ENCODE measurements at regions of chr7 and their contacts with region 1.

Region 1: GRCh38 chr7:115015619-115016018 is 93.7 kb downstream of the MDFIC start:
- DNase-seq: no peak
- ATAC-seq: no peak
- H3K4me3 ChIP-seq: no peak overlapping the region
- H3K4me3 Mint-ChIP-seq: no peak overlapping the region
- H3K27ac ChIP-seq: no peak overlapping the region
- H3K27ac Mint-ChIP-seq: no peak overlapping the region
- H3K4me1 ChIP-seq: peaks cover 9% of the 10 kb centered on the region
- H3K4me1 Mint-ChIP-seq: peaks cover 39% of the 10 kb centered on the region
- H3K27me3 ChIP-seq: no peaks in the 10 kb centered on the region
- H3K27me3 Mint-ChIP-seq: no peaks in the 10 kb centered on the region
- CTCF ChIP-seq: no peak

Region 2: DNA sequence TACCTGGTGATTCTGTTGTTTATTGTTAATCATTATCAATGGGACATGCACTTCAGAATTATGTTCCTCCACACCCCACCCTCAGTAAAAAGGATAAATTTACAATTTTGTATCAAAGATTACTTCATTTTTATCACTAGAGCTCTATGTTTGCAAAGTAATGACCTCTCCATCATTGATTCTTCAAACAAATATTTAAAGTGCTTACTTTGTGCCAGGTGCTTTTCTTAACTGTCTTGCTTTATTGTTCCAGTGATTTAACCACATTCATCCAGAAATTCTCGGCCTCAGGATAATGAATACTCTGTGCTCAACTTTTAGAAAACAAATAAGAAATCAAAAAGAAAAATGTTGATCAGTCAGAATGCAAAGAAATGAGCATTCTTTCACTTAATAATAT is 745.9 kb before region 1 on chr7:
- CTCF ChIA-PET with region 1: no interaction called
- POLR2A ChIA-PET with region 1: no interaction called
- intact Hi-C with region 1: no loop called
- DNase-seq: no peak
- ATAC-seq: no peak
- H3K4me3 ChIP-seq: no peak overlapping the region
- H3K4me3 Mint-ChIP-seq: no peak overlapping the region
- H3K27ac ChIP-seq: no peak overlapping the region
- H3K27ac Mint-ChIP-seq: no peak overlapping the region
- H3K4me1 ChIP-seq: no peaks in the 10 kb centered on the region
- H3K4me1 Mint-ChIP-seq: no peaks in the 10 kb centered on the region
- H3K27me3 ChIP-seq: no peaks in the 10 kb centered on the region
- H3K27me3 Mint-ChIP-seq: no peaks in the 10 kb centered on the region
- CTCF ChIP-seq: no peak

Region 3: GRCh38 chr7:114527589-114527988 is 488.0 kb before region 1 on chr7:
- CTCF ChIA-PET with region 1: no interaction called
- POLR2A ChIA-PET with region 1: no interaction called
- intact Hi-C with region 1: no loop called
- DNase-seq: no peak
- ATAC-seq: no peak
- H3K4me3 ChIP-seq: no peak overlapping the region
- H3K4me3 Mint-ChIP-seq: no peak overlapping the region
- H3K27ac ChIP-seq: no peak overlapping the region
- H3K27ac Mint-ChIP-seq: no peak overlapping the region
- H3K4me1 ChIP-seq: no peaks in the 10 kb centered on the region
- H3K4me1 Mint-ChIP-seq: no peaks in the 10 kb centered on the region
- H3K27me3 ChIP-seq: no peaks in the 10 kb centered on the region
- H3K27me3 Mint-ChIP-seq: peaks cover 2% of the 10 kb centered on the region
- CTCF ChIP-seq: no peak

Region 4: GRCh38 chr7:114583281-114583680 is 432.3 kb before region 1 on chr7:
- CTCF ChIA-PET with region 1: no interaction called
- POLR2A ChIA-PET with region 1: no interaction called
- intact Hi-C with region 1: no loop called
- DNase-seq: no peak
- ATAC-seq: no peak
- H3K4me3 ChIP-seq: no peak overlapping the region
- H3K4me3 Mint-ChIP-seq: no peak overlapping the region
- H3K27ac ChIP-seq: no peak overlapping the region
- H3K27ac Mint-ChIP-seq: no peak overlapping the region
- H3K4me1 ChIP-seq: no peaks in the 10 kb centered on the region
- H3K4me1 Mint-ChIP-seq: no peaks in the 10 kb centered on the region
- H3K27me3 ChIP-seq: no peaks in the 10 kb centered on the region
- H3K27me3 Mint-ChIP-seq: no peaks in the 10 kb centered on the region
- CTCF ChIP-seq: no peak

Region 5: GRCh38 chr7:114988755-114989375 is 26.8 kb before region 1 on chr7:
- CTCF ChIA-PET with region 1: no interaction called
- POLR2A ChIA-PET with region 1: no interaction called
- intact Hi-C with region 1: loop called in 1 of 2 experiments (anchors 1 kb)
- DNase-seq: no peak
- ATAC-seq: no peak
- H3K4me3 ChIP-seq: no peak overlapping the region
- H3K4me3 Mint-ChIP-seq: no peak overlapping the region
- H3K27ac ChIP-seq: no peak overlapping the region
- H3K27ac Mint-ChIP-seq: no peak overlapping the region
- H3K4me1 ChIP-seq: no peaks in the 10 kb centered on the region
- H3K4me1 Mint-ChIP-seq: peaks cover 34% of the 10 kb centered on the region
- H3K27me3 ChIP-seq: no peaks in the 10 kb centered on the region
- H3K27me3 Mint-ChIP-seq: no peaks in the 10 kb centered on the region
- CTCF ChIP-seq: no peak

Measured in CD8-positive, alpha-beta T cell (primary cell).